Activated B cell treated with CpG ODN at 0.5 μM for 24 hours (primary cell): ENCODE measurements at regions of chr3 and their contacts with region 1.

Region 1: GRCh38 chr3:188439080-188439479 is 285.1 kb downstream of the LPP start:
- DNase-seq: no peak
- ATAC-seq: peak; percentile 85
- H3K4me3 Mint-ChIP-seq: peak overlapping the region; percentile 52
- H3K27ac Mint-ChIP-seq: peak overlapping the region; percentile 88
- H3K4me1 Mint-ChIP-seq: peaks cover 95% of the 10 kb centered on the region
- H3K27me3 Mint-ChIP-seq: no peaks in the 10 kb centered on the region
- CTCF ChIP-seq: no peak

Region 2: GRCh38 chr3:188220988-188221818 is 217.9 kb before region 1 on chr3:
- CTCF ChIA-PET with region 1: no interaction called
- POLR2A ChIA-PET with region 1: no interaction called
- intact Hi-C with region 1: no loop called
- DNase-seq: no peak
- ATAC-seq: no peak
- H3K4me3 Mint-ChIP-seq: no peak overlapping the region
- H3K27ac Mint-ChIP-seq: no peak overlapping the region
- H3K4me1 Mint-ChIP-seq: peaks cover 10% of the 10 kb centered on the region
- H3K27me3 Mint-ChIP-seq: no peaks in the 10 kb centered on the region
- CTCF ChIP-seq: no peak

Region 3: GRCh38 chr3:188294823-188295487 is 144.1 kb before region 1 on chr3:
- CTCF ChIA-PET with region 1: no interaction called
- POLR2A ChIA-PET with region 1: interaction called, 3 read pairs
- intact Hi-C with region 1: loop called (anchors 5 kb)
- DNase-seq: no peak
- ATAC-seq: no peak
- H3K4me3 Mint-ChIP-seq: peak overlapping the region; percentile 17
- H3K27ac Mint-ChIP-seq: peak overlapping the region; percentile 25
- H3K4me1 Mint-ChIP-seq: peaks cover 85% of the 10 kb centered on the region
- H3K27me3 Mint-ChIP-seq: no peaks in the 10 kb centered on the region
- CTCF ChIP-seq: no peak

Region 4: DNA sequence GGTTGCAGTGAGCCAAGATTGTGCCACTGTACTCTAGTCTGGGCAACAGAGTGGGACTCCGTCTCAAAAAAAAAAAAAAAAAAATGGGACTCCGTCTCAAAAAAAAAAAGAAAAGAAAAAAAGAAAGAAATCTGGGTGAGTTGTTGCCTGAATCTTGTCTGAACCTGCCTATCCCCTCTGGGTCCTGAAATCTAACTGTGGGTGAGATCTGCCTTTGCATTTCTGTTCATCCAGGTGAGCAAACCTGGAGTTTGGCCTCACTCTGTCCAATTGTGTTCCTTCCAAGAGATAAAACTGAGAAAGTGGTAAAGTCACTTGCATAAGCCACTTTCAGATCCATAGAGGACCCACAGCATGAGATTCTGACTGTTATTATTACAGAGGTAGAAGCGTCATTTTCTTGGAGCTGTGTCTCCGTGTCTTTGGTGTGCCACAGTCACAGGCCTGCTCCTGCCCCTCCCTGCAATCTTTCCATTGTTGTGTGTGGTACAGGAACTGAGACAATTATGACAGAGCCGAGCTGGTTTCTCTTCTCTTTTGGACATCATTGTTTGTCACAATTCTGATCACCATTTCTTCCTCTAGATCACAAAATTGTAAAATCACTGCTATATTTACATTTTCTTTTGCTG is 49.3 kb before region 1 on chr3:
- CTCF ChIA-PET with region 1: interaction called, 4 read pairs
- POLR2A ChIA-PET with region 1: interaction called, 17 read pairs
- intact Hi-C with region 1: loop called (anchors 1 kb)
- DNase-seq: peak; percentile 29
- ATAC-seq: peak; percentile 84
- H3K4me3 Mint-ChIP-seq: peak overlapping the region; percentile 65
- H3K27ac Mint-ChIP-seq: peak overlapping the region; percentile 98
- H3K4me1 Mint-ChIP-seq: peaks cover 87% of the 10 kb centered on the region
- H3K27me3 Mint-ChIP-seq: no peaks in the 10 kb centered on the region
- CTCF ChIP-seq: no peak

Region 5: DNA sequence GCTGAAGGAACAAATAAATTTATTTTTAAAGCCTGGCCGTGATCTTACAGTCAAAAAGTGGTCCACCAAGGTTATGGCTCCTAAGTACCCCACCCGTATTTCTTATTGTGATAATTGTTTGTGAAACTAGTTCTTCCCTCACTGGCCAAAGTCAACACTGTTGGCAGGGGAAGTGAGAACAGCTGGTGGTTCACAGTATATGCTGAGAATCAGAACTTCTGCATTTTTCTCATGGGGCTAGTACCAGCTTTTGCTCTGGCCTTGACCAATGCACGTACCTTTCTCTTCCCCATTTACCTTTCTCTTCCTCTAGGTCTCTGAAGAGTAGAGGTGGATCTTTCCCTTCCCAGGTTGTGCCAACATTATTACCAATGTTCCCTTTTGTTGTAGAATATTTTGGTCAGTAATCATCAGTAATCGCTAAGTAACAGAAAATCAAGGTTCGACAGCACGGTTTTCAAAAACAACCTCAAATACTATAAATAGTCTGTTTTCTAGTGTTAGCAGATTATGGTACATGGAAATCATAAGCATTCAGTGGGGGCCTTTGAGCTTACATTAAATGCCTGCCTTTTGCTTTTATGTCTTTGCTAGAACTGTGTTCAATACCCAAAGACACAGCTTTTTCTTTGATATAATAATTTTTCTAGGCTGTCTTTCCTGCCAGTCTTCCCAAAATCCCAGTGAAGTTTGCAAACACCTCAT is 17.1 kb before region 1 on chr3:
- CTCF ChIA-PET with region 1: interaction called, 3 read pairs
- POLR2A ChIA-PET with region 1: interaction called, 50 read pairs
- intact Hi-C with region 1: loop called (anchors 1 kb)
- DNase-seq: no peak
- ATAC-seq: peak; percentile 95
- H3K4me3 Mint-ChIP-seq: peak overlapping the region; percentile 69
- H3K27ac Mint-ChIP-seq: peak overlapping the region; percentile 98
- H3K4me1 Mint-ChIP-seq: peaks cover 90% of the 10 kb centered on the region
- H3K27me3 Mint-ChIP-seq: no peaks in the 10 kb centered on the region
- CTCF ChIP-seq: no peak

Region 6: DNA sequence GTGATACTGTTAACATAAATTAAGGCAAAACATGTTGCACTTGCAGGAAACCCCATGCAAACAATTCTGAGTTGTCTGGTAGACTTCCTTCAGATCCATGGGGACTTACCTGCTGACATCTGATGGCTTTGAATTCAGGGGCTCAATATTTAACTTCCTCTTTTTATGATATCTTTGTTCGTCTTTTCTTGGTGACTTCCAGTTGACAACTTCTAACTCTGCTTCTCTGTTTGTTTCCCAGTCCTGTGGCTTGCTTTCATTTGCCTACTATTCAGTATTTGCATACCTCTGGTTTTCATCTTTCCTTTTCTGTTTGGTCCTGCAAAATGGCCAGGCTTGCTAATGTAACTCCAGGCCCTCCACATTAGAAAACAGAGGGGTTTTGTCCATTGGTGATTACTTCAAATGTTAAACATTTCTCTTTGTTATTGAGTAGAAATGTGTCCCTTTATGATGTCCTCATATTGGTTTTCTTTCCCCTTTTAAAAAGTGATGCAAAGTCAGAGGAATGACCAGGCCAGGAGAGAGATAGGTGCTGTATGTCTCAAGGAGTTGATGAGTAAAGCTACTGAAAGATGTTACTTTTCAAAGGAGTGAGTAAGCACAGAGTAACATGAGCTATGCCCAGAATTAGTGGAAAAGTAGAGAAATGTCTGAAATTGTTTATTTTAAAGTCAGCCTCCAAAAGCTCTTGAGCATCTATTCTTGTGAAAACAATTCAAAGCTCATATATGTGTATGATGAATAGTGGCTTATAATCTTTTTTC is 50.7 kb after region 1 on chr3:
- CTCF ChIA-PET with region 1: no interaction called
- POLR2A ChIA-PET with region 1: interaction called, 3 read pairs
- intact Hi-C with region 1: loop called (anchors 2 kb)
- DNase-seq: no peak
- ATAC-seq: peak; percentile 88
- H3K4me3 Mint-ChIP-seq: peak overlapping the region; percentile 57
- H3K27ac Mint-ChIP-seq: peak overlapping the region; percentile 84
- H3K4me1 Mint-ChIP-seq: peaks cover 48% of the 10 kb centered on the region
- H3K27me3 Mint-ChIP-seq: no peaks in the 10 kb centered on the region
- CTCF ChIP-seq: no peak

Region 7: DNA sequence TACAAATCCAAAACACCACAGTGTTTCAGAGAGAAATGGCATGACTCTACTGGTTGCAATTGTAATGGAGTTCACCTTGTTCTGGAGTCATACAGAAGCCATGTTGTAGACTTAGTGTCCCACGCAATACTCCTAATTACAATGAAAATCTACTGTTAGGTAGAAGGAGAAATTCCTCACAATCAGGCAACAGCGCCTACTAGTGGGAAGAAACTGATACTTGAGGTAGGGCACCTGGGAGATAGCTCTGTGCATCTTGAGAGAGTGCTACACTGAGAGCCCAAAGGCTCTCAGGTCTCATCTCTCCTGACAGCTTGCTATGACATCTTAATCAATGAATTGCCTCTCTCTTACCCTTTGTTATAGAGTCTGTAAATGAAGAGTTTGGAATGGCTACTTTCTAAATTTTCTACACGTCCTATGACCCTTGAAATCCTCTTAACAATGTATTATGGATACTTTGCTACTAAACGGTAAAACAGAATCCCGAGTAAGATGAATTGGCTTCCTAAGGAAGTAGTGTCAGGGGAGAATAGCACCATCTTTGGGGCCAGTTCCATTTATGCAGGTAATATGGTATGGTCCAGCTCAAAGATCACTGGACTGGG is 310.0 kb after region 1 on chr3:
- CTCF ChIA-PET with region 1: interaction called, 5 read pairs
- POLR2A ChIA-PET with region 1: interaction called, 19 read pairs
- intact Hi-C with region 1: loop called (anchors 2 kb)
- DNase-seq: no peak
- ATAC-seq: no peak
- H3K4me3 Mint-ChIP-seq: no peak overlapping the region
- H3K27ac Mint-ChIP-seq: peak overlapping the region; percentile 55
- H3K4me1 Mint-ChIP-seq: peaks cover 43% of the 10 kb centered on the region
- H3K27me3 Mint-ChIP-seq: no peaks in the 10 kb centered on the region
- CTCF ChIP-seq: no peak